Calu3 (cell line): ENCODE measurements at regions of chr6 and their contacts with region 1.

Region 1: GRCh38 chr6:44133003-44133931 is 5.9 kb downstream of the TMEM63B start:
- DNase-seq: peak; percentile 77
- H3K4me3 Mint-ChIP-seq: peak overlapping the region; percentile 5
- H3K27ac Mint-ChIP-seq: peak overlapping the region; percentile 27
- H3K4me1 Mint-ChIP-seq: peaks cover 46% of the 10 kb centered on the region
- H3K27me3 Mint-ChIP-seq: no peaks in the 10 kb centered on the region
- CTCF ChIP-seq: no peak

Region 2: GRCh38 chr6:43547222-43547621 is 586.0 kb before region 1 on chr6:
- CTCF ChIA-PET with region 1: no interaction called
- intact Hi-C with region 1: no loop called
- DNase-seq: no peak
- H3K4me3 Mint-ChIP-seq: no peak overlapping the region
- H3K27ac Mint-ChIP-seq: no peak overlapping the region
- H3K4me1 Mint-ChIP-seq: no peaks in the 10 kb centered on the region
- H3K27me3 Mint-ChIP-seq: no peaks in the 10 kb centered on the region
- CTCF ChIP-seq: no peak

Region 3: GRCh38 chr6:44116641-44117382 is 16.5 kb before region 1 on chr6:
- CTCF ChIA-PET with region 1: interaction called, 14 read pairs
- intact Hi-C with region 1: no loop called
- DNase-seq: no peak
- H3K4me3 Mint-ChIP-seq: peak overlapping the region; percentile 10
- H3K27ac Mint-ChIP-seq: peak overlapping the region; percentile 70
- H3K4me1 Mint-ChIP-seq: peaks cover 71% of the 10 kb centered on the region
- H3K27me3 Mint-ChIP-seq: no peaks in the 10 kb centered on the region
- CTCF ChIP-seq: no peak

Region 4: GRCh38 chr6:44431118-44431725 is 298.0 kb after region 1 on chr6:
- CTCF ChIA-PET with region 1: no interaction called
- intact Hi-C with region 1: no loop called
- DNase-seq: peak; percentile 70
- H3K4me3 Mint-ChIP-seq: no peak overlapping the region
- H3K27ac Mint-ChIP-seq: no peak overlapping the region
- H3K4me1 Mint-ChIP-seq: peaks cover 12% of the 10 kb centered on the region
- H3K27me3 Mint-ChIP-seq: no peaks in the 10 kb centered on the region
- CTCF ChIP-seq: peak; percentile 88

Region 5: GRCh38 chr6:45086360-45087084 is 953.3 kb after region 1 on chr6:
- CTCF ChIA-PET with region 1: no interaction called
- intact Hi-C with region 1: no loop called
- DNase-seq: no peak
- H3K4me3 Mint-ChIP-seq: no peak overlapping the region
- H3K27ac Mint-ChIP-seq: no peak overlapping the region
- H3K4me1 Mint-ChIP-seq: no peaks in the 10 kb centered on the region
- H3K27me3 Mint-ChIP-seq: no peaks in the 10 kb centered on the region
- CTCF ChIP-seq: no peak